ENCODE measurements at regions of chr15 and their contacts with region 1.

Region 1: DNA sequence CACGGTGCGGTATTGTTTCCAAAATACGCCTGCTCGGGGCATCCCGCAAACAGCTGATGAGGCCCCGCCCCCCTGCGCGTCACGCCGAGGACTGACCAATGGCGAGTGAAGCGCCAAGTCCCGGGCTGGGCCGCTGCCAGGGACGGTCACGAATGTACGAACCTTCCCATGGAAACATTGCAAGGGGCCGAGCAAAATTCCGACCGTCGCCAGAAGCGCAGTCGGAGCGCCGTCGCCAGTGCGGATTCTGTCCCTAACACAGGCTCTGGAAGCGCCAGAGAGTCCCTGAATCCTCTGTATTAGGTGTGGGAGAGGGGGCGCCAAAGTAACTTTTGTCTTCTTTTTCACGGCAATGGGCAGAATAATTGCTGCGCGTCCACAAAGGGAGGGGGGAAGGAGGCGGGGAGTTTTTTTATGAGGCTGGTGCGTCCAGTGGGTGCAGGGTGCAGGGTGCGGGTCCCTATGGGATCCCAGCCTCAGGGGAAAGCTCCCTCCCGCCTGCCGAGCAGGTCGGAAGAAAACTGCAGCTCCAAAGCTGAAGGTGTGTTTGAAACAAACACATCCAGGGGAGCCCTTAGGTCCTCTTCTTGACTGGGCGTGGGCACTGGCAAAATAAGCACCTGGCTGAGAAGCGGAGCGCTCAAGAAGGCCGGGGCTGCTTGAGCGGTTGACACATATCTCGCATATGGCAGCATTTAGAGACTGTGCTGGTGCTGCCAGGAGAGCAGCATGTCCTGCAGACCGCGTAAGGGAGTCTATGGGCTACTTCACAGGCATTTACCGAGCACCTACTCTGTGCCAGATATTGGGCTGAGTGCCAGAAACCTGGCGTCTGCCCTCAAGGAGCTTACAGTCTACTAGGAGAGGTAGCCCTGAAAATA is at the start of gene BMF:
- DNase-seq: peak; percentile 91
- H3K4me3 ChIP-seq: peak within 1 kb of the TSS; percentile 81
- CTCF ChIP-seq: peak; percentile 31

Region 2: DNA sequence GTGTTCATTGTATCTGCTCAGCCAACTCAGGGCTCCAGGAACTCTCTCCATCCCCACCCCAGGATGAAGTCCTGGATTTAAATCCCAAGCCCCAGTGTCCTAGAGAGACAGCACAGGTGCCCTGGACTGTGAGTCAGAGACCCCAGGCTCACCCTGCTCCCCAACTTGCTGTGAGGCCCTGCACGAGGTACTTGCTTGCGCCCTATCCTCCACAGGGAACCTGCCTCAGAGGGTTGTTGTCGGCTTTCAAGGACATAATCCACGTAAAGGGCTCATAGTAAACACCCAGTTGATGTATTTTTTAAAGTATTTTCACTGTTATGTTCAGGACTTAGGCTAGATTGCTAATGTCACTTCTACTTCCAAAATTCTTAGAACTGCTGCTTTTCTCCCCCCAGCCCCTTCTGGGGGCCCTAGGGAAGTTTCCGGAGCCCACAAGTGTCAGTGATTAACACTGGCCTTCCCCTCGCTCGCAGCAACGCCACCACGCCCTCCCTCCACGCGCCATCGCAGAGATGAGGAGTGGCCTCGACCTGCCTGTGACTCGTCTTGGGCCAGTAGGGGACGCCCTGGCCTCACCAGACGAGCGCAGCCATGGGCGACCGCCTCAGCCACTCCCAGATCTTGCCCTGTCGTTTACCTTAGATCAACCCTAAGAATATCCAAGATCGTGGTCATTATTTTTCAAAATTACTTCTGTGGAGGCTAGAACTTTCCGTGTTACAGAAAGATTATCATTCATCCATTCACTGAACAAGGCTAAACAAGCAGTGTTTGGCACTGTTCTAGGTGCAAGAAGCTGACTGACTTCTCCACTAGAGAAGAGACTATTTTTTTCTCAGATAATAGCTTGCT is 64.2 kb before region 1 on chr15:
- CTCF ChIA-PET with region 1: interaction called, 109 read pairs
- POLR2A ChIA-PET with region 1: interaction called, 8 read pairs
- DNase-seq: no peak
- H3K4me3 ChIP-seq: peak overlapping the region; percentile 36
- CTCF ChIP-seq: peak; percentile 99

Region 3: DNA sequence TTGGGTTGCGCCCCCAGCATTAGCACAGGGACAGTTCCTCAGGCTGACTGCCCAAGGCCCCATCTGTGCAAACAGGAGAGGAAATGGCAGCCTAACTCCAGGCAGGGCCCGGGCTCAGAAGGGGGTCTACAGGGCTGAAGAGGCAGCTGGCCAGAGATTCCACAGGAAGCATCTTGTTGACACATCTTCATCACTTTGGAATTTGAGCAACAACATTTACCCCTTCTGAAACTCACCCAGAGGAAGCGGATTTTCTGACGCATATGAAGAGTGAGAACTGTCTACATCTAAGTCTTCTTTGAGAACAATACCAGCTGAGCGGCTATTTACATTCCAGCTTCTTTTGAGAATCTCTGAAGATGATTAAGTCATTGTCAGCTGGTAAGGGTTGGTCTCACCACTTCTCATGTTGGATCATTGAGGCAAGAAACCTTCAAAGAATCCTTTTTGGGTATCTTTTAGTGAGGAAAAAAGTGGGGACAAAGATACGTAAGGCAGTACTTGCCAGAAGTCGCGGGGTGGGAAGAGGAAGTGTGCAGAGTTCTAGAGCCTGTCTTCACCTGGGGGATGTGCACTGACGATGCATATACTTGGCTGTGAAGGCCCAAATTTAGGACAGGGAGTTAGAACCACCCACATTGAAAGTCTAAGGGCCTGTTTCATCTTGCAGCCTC is 44.7 kb before region 1 on chr15:
- CTCF ChIA-PET with region 1: interaction called, 20 read pairs
- POLR2A ChIA-PET with region 1: no interaction called
- DNase-seq: peak; percentile 59
- H3K4me3 ChIP-seq: no peak overlapping the region
- CTCF ChIP-seq: no peak

Region 4: GRCh38 chr15:40081691-40082194 is 27.4 kb before region 1 on chr15:
- CTCF ChIA-PET with region 1: interaction called, 270 read pairs
- POLR2A ChIA-PET with region 1: no interaction called
- DNase-seq: no peak
- H3K4me3 ChIP-seq: peak overlapping the region; percentile 41
- CTCF ChIP-seq: peak; percentile 4

Region 5: DNA sequence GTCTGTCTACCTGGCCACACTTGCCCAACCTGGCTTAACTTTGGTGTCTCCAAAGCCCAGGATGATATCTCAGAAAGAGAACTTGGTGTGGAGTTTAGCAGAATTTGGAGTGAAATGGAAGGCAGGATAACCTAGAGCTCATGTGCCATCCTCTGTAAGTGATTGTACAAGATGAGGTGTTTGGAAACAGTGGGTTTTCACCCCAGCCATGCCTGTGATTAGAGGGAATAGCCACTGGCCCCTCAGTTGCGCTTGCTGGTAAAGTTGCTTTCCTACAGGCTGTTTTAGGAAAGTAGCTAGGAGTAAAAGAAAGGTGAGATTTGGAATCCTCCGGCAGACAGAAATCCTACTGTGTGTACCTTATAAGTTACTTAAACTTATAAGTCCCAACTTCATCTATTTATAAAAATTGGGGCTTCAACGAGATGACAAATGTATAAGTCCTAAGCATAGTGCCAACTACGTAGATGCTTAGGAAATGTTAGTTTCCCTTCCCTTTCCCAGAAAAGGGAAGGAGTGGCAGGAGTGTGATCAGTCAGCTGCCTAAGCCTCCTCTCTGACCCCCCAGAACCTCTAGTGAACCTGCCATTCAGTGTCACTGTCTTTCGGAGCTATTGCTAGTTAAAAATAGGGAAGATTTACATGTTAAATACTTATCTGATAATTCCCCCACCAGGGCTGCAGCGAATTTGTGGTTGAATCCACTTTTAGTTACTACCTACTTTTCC is 13.0 kb after region 1 on chr15:
- CTCF ChIA-PET with region 1: interaction called, 17 read pairs
- POLR2A ChIA-PET with region 1: no interaction called
- DNase-seq: no peak
- H3K4me3 ChIP-seq: no peak overlapping the region
- CTCF ChIP-seq: no peak

Region 6: DNA sequence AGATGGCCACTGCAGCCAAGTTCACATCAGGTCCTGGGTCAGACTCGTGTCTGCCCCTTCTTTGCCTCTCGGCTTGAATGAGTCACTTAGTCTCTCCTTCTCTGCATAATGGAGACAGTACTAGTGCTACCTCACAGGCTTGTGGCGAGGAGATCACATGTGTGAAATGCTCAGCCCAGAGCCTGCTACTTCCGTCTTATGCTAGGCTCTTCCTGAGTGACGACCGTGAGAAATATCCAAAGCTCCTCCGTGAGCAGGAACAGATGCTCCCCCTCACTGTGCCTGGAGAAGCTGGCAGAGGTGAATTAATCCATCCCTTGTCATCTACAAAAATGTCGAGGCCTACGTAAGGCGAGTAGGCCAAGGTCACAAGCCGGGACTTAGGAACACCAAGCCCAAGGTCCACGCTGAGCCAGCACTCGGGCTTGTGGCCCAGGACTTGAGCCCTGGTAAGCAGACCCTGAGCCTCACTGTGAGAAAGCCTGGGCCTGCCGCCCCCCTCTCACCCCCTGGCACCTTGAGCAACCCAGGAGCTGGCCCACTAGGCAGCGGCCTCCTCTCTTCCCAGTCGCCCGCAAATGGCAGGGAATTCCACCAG is 147.6 kb after region 1 on chr15:
- CTCF ChIA-PET with region 1: no interaction called
- POLR2A ChIA-PET with region 1: no interaction called
- DNase-seq: peak; percentile 51
- H3K4me3 ChIP-seq: no peak overlapping the region
- CTCF ChIP-seq: no peak